Breast epithelium (tissue), 4 donors: ENCODE measurements at regions of chr6 and their contacts with region 1.

Region 1: DNA sequence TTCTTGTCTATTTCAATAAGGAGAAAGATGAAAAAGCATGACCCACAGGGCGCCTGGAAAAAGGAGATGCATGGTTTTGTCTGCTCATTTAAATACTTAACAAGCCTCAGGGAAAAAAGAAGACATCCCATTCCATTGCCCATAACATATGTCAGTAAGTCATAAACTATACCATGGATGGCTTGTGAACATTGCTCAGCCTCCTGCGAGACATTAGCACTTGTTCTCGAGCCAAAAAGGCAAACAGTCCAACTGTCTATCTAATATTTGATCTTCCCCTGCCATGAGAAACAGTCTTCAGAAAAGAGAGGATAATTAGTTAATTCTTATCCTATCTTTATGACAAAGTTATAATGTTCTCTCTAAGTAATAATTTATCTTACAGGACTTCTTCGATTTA is 527.4 kb downstream of the HACE1 start:
- DNase-seq: no peak
- H3K4me3 ChIP-seq: no peak overlapping the region
- H3K27ac ChIP-seq: no peak overlapping the region
- H3K4me1 ChIP-seq: no peaks in the 10 kb centered on the region
- H3K27me3 ChIP-seq: no peaks in the 10 kb centered on the region
- CTCF ChIP-seq: no peak
- POLR2A ChIP-seq: no peak

Region 2: DNA sequence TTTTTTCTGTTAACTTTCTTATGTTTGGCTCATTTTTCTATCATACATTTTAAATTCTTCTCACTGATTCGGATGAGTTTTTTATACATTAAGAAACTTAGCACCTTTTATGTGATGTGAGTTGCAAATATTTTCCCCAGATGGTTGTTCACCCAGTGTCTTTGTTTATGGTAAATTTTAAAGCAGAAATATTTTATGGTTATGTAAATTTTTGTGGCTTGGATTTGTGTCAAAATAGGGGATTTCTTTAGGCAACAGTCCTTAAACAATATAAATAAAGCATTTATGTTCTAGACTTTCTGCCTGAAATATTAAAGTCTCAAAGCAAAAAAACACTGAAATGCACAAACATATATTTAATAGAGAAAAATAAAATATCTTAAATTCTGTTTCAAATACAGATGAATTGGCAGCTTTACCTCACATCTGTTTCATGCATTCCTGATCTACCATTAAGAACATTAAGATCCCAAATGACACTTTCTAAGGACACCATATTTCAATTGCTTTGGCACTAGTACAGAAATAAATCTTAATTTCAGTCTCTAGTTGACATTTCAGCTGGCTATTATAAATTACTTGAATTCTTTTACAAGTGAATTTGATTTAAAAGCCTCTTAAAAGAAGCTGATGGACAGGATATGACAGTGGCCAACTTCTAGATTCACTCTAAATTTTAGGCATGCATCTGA is 119.2 kb before region 1 on chr6:
- intact Hi-C with region 1: loop called (anchors 5 kb)
- DNase-seq: no peak
- H3K4me3 ChIP-seq: no peak overlapping the region
- H3K27ac ChIP-seq: no peak overlapping the region
- H3K4me1 ChIP-seq: no peaks in the 10 kb centered on the region
- H3K27me3 ChIP-seq: no peaks in the 10 kb centered on the region
- CTCF ChIP-seq: no peak
- POLR2A ChIP-seq: no peak